ACHN (cell line): ENCODE measurements at regions of chr3 and their contacts with region 1.

Region 1: DNA sequence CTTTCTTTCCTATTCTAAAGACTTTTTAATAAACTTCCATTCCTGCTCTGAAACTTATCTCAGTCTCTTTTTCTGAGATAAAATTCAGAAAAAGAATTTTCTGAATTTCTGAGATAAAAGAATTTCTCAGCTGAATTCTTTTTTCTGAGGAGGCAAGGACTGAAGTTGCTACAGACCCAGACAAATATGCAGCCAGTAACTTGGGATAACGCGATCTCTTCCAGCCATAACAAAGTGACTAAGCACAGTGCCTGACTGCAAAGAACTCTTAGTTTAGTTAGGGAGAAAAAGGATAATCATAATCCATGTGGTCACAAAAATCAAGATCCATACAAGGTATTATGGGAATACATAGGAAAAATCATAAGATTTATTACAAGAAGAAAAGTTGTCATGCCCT is 222.0 kb upstream of the GAP43 start:
- DNase-seq: no peak

Region 2: DNA sequence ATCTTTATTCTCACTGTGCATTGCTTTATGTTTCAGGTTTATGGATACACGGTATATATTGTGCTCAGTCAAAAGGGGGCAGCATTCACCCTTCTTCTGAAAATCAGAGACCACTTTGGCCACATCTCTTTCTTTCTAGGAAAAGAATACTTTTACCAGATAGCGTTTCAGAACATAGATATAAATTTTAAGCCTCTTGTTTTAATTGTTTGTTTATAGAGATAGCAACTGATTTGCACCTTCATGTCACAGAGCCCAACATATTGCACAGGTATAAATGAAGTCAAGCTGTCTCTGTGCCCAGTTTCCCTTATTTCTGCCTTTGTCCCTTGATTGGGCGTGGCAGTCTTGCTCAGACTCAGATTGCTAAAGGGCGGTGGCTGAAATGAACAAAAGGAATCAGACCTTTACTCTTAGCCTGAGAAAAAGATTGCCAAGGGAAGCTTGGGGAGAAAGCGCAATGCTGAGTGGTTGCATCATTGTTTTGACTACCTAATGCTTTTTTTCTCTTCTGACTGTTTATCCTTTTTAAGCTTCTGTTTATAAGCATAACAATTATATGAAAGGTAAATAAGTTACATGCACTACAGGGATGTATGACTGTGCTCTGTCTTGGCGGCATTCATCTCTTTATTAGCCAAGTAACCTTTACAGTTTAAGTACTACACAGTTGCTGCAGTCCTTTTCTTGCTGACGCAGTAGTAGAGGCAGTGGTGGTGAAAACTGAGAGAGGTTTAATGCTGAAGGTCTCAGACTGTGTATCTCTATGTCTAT is 183.4 kb before region 1 on chr3:
- in situ Hi-C with region 1: loop called (anchors 25 kb)
- DNase-seq: peak; percentile 43